Calu3 (cell line): ENCODE measurements at regions of chr3 and their contacts with region 1.

Region 1: DNA sequence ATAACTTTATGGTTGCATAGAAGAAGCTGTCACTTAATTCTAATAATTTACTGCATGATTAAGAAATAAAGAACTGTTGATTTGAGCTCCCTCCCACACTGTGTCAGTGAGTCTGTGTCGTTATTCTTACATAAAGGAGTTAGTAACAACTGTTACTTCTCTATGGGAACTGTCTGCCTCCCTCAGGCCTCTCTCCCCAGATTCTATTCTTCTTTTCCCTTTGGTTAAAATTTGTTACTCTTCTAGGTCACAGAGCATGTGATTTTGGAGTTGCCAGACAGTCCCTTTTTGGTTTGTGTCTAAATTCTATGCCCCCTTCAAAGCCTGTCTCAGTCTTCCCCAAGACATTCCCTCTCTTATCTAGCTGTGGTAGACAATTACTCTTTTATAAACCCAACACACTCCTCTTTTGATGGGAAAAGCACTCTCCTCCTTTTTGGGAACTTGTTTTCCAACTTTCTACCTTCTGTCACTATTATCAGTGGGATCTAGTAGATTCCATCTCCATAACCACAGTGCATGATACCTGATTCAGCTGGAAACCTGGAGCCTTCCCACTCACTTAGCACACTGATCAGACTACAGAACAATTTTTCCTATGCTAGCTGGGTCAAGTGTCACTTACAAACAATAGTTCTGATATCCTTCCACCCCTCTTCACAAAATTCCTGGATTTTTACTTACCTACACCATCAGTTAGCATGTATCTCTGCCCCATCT is 422.1 kb upstream of the TGFBR2 start:
- DNase-seq: no peak
- H3K4me3 Mint-ChIP-seq: peak overlapping the region; percentile 0
- H3K27ac Mint-ChIP-seq: peak overlapping the region; percentile 33
- H3K4me1 Mint-ChIP-seq: peaks cover 26% of the 10 kb centered on the region
- H3K27me3 Mint-ChIP-seq: no peaks in the 10 kb centered on the region
- CTCF ChIP-seq: no peak

Region 2: GRCh38 chr3:30170681-30171438 is 13.4 kb before region 1 on chr3:
- CTCF ChIA-PET with region 1: interaction called, 5 read pairs
- intact Hi-C with region 1: loop called (anchors 2 kb)
- DNase-seq: peak; percentile 1
- H3K4me3 Mint-ChIP-seq: no peak overlapping the region
- H3K27ac Mint-ChIP-seq: no peak overlapping the region
- H3K4me1 Mint-ChIP-seq: peaks cover 23% of the 10 kb centered on the region
- H3K27me3 Mint-ChIP-seq: no peaks in the 10 kb centered on the region
- CTCF ChIP-seq: no peak

Region 3: DNA sequence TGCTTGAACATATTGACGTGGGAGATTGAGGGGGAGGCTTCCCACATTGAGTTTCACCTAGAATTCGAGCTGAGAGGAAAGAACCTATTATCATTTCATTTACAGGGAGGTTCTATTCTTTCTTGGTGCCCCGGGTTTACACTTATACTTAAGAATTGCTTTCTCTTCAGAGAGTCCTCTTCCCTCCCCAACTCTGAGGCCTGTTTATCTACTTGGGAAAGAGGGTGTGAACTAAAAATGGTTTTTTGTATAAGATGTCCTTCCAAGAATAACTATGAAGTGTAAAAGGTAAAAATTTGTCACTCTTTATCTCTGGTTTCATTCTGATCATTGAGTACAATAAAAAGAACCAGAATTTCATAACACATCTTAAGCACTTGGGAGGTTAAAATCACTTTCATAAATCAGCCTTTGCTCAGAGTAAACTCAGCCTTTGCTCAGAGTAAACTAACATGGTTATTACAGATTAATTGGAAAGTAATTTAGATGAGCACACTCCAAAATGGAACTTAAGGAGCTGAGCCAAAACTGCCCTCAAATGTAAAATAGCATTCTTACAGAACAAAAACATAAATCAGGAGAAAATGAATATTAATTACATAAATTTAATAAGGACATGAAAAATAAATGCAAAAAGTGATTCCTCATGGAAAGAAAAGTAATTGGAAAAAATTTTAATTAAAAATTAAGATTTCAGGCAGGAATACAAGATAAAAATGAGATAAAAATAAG is 635.0 kb after region 1 on chr3:
- CTCF ChIA-PET with region 1: no interaction called
- intact Hi-C with region 1: no loop called
- DNase-seq: no peak
- H3K4me3 Mint-ChIP-seq: no peak overlapping the region
- H3K27ac Mint-ChIP-seq: no peak overlapping the region
- H3K4me1 Mint-ChIP-seq: no peaks in the 10 kb centered on the region
- H3K27me3 Mint-ChIP-seq: no peaks in the 10 kb centered on the region
- CTCF ChIP-seq: no peak